ENCODE measurements at regions of chr2 and their contacts with region 1.

Region 1: DNA sequence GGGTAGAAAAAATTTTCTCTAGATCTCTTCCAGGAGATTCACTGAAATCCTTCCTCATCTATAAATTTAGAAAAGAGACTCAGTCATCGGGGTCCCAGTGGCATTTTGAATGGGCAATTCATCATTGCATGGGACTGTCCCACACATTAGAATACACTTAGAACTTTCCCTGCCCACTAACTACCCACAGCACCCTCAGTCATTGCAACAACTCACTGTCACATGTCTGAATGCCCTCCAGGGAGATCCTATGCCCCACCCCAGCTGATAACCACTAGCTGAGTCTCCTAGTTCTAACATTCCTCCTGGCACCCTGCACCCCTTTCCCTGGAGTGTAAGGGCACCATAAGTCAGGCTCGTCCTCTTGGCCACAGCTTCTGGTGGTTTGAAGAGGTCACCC is 89.6 kb downstream of the INSIG2 start:
- DNase-seq: peak; percentile 39
- H3K4me3 Mint-ChIP-seq: no peak overlapping the region
- H3K27ac Mint-ChIP-seq: peak overlapping the region; percentile 78
- H3K4me1 Mint-ChIP-seq: peaks cover 19% of the 10 kb centered on the region
- H3K27me3 Mint-ChIP-seq: peaks cover 4% of the 10 kb centered on the region

Region 2: GRCh38 chr2:118130385-118130784 is 47.5 kb before region 1 on chr2:
- CTCF ChIA-PET with region 1: interaction called, 3 read pairs
- POLR2A ChIA-PET with region 1: no interaction called
- intact Hi-C with region 1: loop called (anchors 2 kb)
- DNase-seq: no peak
- H3K4me3 Mint-ChIP-seq: no peak overlapping the region
- H3K27ac Mint-ChIP-seq: no peak overlapping the region
- H3K4me1 Mint-ChIP-seq: peaks cover 7% of the 10 kb centered on the region
- H3K27me3 Mint-ChIP-seq: peaks cover 17% of the 10 kb centered on the region

Region 3: GRCh38 chr2:118371515-118371914 is 193.6 kb after region 1 on chr2:
- CTCF ChIA-PET with region 1: no interaction called
- POLR2A ChIA-PET with region 1: no interaction called
- intact Hi-C with region 1: no loop called
- DNase-seq: peak; percentile 12
- H3K4me3 Mint-ChIP-seq: no peak overlapping the region
- H3K27ac Mint-ChIP-seq: no peak overlapping the region
- H3K4me1 Mint-ChIP-seq: no peaks in the 10 kb centered on the region
- H3K27me3 Mint-ChIP-seq: peaks cover 13% of the 10 kb centered on the region

Measured in activated CD4-positive, alpha-beta memory T cell treated with anti-CD3 and anti-CD28 coated beads for 36 hours (primary cell).